A673 (cell line): ENCODE measurements at regions of chr2 and their contacts with region 1.

Region 1: DNA sequence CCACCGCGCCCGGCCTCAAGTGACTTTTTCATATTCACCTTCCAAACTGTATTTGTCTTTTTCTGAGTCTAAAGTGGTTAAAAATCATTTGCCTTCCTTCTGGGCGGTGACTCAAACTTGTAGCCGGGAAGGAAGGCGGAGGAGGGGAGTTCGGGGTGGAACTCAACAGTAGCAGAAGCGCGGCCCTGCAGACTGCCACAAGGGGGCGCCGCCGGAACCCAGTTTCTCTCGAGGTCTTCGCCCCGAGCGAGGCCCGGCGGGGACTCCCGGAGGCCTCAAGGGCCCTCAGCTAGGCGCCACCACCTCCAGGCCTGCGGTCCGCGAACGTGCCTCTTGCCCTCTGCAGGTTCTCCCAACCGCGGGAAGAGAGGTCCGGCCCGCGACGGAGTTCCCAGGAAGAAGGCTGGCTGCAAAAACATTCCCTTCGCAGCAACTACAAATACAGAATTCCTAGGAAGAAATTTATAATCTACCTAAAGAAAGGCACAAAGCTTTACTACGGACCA is 16.8 kb upstream of the ITM2C start:
- DNase-seq: peak; percentile 89
- H3K4me3 ChIP-seq: no peak overlapping the region
- H3K27ac ChIP-seq: no peak overlapping the region
- H3K4me1 ChIP-seq: no peaks in the 10 kb centered on the region
- H3K27me3 ChIP-seq: no peaks in the 10 kb centered on the region
- CTCF ChIP-seq: peak; percentile 93

Region 2: GRCh38 chr2:230902180-230902899 is 54.4 kb after region 1 on chr2:
- CTCF ChIA-PET with region 1: no interaction called
- POLR2A ChIA-PET with region 1: no interaction called
- intact Hi-C with region 1: loop called (anchors 5 kb)
- DNase-seq: peak; percentile 70
- H3K4me3 ChIP-seq: no peak overlapping the region
- H3K27ac ChIP-seq: no peak overlapping the region
- H3K4me1 ChIP-seq: no peaks in the 10 kb centered on the region
- H3K27me3 ChIP-seq: no peaks in the 10 kb centered on the region
- CTCF ChIP-seq: peak; percentile 87

Region 3: GRCh38 chr2:230913406-230914143 is 65.6 kb after region 1 on chr2:
- CTCF ChIA-PET with region 1: no interaction called
- POLR2A ChIA-PET with region 1: no interaction called
- intact Hi-C with region 1: loop called (anchors 1 kb)
- DNase-seq: peak; percentile 49
- H3K4me3 ChIP-seq: no peak overlapping the region
- H3K27ac ChIP-seq: no peak overlapping the region
- H3K4me1 ChIP-seq: peaks cover 6% of the 10 kb centered on the region
- H3K27me3 ChIP-seq: no peaks in the 10 kb centered on the region
- CTCF ChIP-seq: peak; percentile 59